PC-9 (cell line): ENCODE measurements at regions of chr1 and their contacts with region 1.

Region 1: DNA sequence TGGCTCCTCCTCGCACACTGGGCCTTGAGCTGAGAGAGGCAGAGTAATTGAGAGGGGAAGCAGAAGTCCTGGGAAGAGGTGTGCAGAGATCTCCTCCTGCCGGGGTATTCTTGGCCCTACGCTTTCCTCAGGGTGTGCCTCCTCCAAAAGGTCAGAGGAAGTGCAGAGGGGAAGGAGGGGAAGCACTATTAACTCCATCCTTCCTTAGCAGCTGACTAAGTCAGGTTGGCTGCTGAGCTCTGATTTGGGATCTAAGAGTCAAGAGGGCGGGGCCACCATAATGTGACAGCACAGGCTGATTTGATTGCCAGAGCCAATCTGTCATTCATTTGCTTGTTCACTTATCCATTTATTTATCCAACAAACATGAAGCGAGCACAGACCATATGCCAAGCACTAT is 12.3 kb downstream of the ATP2B4 start:
- DNase-seq: no peak
- H3K4me3 ChIP-seq: no peak overlapping the region
- H3K27ac ChIP-seq: no peak overlapping the region
- H3K4me1 ChIP-seq: peaks cover 27% of the 10 kb centered on the region
- H3K27me3 ChIP-seq: no peaks in the 10 kb centered on the region
- CTCF ChIP-seq: no peak

Region 2: GRCh38 chr1:203686091-203686632 is 47.2 kb after region 1 on chr1:
- CTCF ChIA-PET with region 1: interaction called, 13 read pairs
- POLR2A ChIA-PET with region 1: no interaction called
- intact Hi-C with region 1: no loop called
- DNase-seq: no peak
- H3K4me3 ChIP-seq: no peak overlapping the region
- H3K27ac ChIP-seq: no peak overlapping the region
- H3K4me1 ChIP-seq: no peaks in the 10 kb centered on the region
- H3K27me3 ChIP-seq: no peaks in the 10 kb centered on the region
- CTCF ChIP-seq: no peak